Endothelial cell of umbilical vein (primary cell): ENCODE measurements at regions of chr4 and their contacts with region 1.

Region 1: GRCh38 chr4:101103381-101104142 is 243.8 kb downstream of the PPP3CA start:
- DNase-seq: peak; percentile 87
- H3K4me3 ChIP-seq: no peak overlapping the region
- H3K27ac ChIP-seq: peak overlapping the region; percentile 56
- H3K4me1 ChIP-seq: peaks cover 28% of the 10 kb centered on the region
- H3K27me3 ChIP-seq: no peaks in the 10 kb centered on the region
- CTCF ChIP-seq: no peak
- POLR2A ChIP-seq: no peak

Region 2: GRCh38 chr4:99986792-99987191 is 1116.8 kb before region 1 on chr4:
- CTCF ChIA-PET with region 1: no interaction called
- POLR2A ChIA-PET with region 1: no interaction called
- dilution Hi-C with region 1: no loop called
- intact Hi-C with region 1: no loop called
- DNase-seq: no peak
- H3K4me3 ChIP-seq: no peak overlapping the region
- H3K27ac ChIP-seq: no peak overlapping the region
- H3K4me1 ChIP-seq: no peaks in the 10 kb centered on the region
- H3K27me3 ChIP-seq: no peaks in the 10 kb centered on the region
- CTCF ChIP-seq: no peak
- POLR2A ChIP-seq: no peak

Region 3: DNA sequence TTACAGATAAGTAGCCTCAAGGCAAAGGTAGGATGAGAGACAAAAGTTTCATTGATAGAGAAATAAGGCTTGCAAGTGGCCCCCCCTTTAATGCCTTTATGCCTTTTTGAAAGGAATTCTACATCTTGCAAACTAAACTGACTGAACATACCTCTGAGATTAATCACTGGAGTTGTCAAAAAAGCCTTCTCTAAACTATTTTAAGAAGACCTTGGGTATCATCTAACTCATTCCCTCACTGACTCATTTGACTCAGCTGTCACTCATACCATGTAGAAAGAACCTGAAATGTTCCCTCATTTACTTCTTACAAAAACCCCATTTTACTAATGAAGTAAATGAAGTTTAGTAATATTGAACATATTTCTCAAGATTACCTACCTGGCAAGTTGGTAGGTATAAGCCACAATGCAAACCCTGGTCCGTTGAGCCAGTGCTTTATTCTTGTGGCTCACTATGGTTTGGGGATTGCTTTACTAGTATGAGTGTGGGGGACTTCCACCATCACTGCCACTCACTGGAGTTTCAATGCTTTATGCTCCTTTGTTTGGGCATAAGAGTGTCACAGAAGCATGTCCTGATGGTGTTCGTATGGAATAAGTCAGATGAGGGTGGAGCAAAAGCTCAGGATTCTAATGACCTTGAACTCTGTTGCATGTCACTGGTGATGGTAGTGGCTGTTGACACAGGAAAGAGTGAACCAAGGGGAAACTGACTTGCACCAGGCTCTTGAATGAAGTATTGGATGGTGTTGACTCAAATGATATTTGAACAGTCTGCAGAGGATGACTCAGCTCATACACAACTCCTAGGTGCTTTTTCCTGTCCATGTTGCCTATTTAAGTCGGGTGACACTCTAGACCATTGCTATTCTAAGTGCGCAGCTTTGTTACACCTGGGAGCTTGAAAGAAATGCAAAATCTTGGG is 280.2 kb before region 1 on chr4:
- CTCF ChIA-PET with region 1: no interaction called
- POLR2A ChIA-PET with region 1: no interaction called
- dilution Hi-C with region 1: no loop called
- intact Hi-C with region 1: no loop called
- DNase-seq: no peak
- H3K4me3 ChIP-seq: no peak overlapping the region
- H3K27ac ChIP-seq: no peak overlapping the region
- H3K4me1 ChIP-seq: no peaks in the 10 kb centered on the region
- H3K27me3 ChIP-seq: no peaks in the 10 kb centered on the region
- CTCF ChIP-seq: no peak
- POLR2A ChIP-seq: no peak

Region 4: DNA sequence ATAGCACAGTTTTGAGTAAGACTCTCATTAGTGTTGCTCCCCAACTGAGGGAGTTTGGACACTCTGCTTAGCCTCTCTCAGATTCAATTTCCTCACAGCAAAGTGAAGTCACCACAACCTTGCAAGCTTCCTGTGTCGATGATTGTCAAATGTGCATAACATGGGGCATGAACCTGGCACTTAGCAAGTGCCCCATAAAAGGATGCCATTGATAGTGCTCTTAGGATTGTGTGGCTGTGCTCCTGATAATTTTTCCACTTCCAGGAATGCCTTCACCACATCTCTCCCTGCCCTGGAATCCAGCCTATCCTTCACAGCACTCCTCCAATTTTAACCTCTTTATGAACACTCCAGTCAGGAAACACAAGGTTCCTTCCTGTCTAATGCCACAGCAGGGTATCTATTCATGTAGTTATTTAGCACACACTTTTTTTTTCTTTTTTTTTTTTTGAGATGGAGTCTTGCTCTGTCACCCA is 65.6 kb before region 1 on chr4:
- CTCF ChIA-PET with region 1: no interaction called
- POLR2A ChIA-PET with region 1: no interaction called
- dilution Hi-C with region 1: no loop called
- intact Hi-C with region 1: loop called (anchors 1 kb)
- DNase-seq: peak; percentile 78
- H3K4me3 ChIP-seq: no peak overlapping the region
- H3K27ac ChIP-seq: peak overlapping the region; percentile 83
- H3K4me1 ChIP-seq: peaks cover 18% of the 10 kb centered on the region
- H3K27me3 ChIP-seq: no peaks in the 10 kb centered on the region
- CTCF ChIP-seq: no peak
- POLR2A ChIP-seq: no peak